A673 (cell line): ENCODE measurements at regions of chr1 and their contacts with region 1.

Region 1: DNA sequence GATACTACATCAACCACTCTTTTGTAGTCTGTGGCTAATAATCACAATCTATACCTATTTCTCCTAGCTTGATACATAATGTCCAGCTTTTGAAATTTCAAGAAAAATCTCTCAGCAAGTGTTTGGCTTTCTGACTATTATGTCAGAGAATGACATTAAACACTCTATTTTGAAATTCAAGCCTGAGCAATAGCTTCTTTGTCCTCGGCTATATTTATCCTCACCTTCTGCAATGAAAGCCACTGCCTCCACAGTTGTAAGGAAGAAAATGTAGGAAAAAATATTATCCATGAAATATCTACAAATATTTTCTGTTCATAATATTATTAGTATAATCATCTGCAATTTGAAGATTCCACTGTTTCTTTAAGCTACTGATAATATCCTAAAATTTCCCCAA is 22.1 kb downstream of the LRRC7 start:
- DNase-seq: no peak
- H3K4me3 ChIP-seq: no peak overlapping the region
- H3K27ac ChIP-seq: no peak overlapping the region
- H3K4me1 ChIP-seq: no peaks in the 10 kb centered on the region
- H3K27me3 ChIP-seq: no peaks in the 10 kb centered on the region
- CTCF ChIP-seq: no peak

Region 2: GRCh38 chr1:68506386-68506785 is 1083.4 kb before region 1 on chr1:
- CTCF ChIA-PET with region 1: no interaction called
- POLR2A ChIA-PET with region 1: no interaction called
- intact Hi-C with region 1: no loop called
- DNase-seq: no peak
- H3K4me3 ChIP-seq: no peak overlapping the region
- H3K27ac ChIP-seq: no peak overlapping the region
- H3K4me1 ChIP-seq: no peaks in the 10 kb centered on the region
- H3K27me3 ChIP-seq: no peaks in the 10 kb centered on the region
- CTCF ChIP-seq: no peak

Region 3: DNA sequence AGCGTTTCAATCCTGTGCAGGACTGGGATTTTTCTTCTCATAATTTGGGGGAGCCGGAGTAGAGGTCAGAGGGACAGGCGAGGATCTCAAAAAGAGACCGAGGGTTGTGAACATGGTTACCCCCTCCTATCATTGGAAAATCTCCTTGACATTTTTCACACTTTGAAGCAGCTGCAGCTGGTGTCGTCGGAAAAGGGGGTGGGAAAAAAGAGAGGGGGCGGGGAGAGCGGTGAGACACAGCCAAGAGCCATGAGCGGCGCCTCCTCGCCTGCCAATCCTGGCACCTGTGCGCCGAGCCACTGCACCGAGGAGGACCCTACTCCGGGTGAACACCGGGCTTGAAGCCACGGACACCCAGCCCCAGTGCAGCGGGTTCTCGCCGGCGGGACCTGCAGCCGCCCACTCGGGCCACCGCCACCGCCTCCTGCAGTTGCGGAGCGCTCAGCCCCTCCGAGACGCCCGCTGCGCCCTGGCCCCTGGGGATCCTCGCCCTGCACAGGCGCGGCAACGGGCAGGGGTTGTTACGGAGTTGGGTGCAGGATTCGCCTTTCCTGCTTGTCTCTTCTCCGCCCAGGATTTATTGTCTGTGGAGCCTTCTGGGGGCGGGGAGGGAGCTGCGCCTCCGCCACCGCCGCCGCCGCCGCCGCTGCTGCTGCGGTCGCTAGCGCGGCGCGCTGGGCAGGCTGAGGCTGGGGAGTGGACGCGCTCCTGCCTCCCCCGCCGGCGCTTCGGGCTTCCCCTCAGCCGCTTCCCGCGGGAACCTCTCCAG is 22.0 kb before region 1 on chr1 and contains the start of gene LRRC7:
- CTCF ChIA-PET with region 1: no interaction called
- POLR2A ChIA-PET with region 1: no interaction called
- intact Hi-C with region 1: no loop called
- DNase-seq: peak; percentile 38
- H3K4me3 ChIP-seq: peak within 1 kb of the TSS; percentile 43
- H3K27ac ChIP-seq: no peak within 1 kb of the TSS
- H3K4me1 ChIP-seq: peaks cover 18% of the 10 kb centered on the region
- H3K27me3 ChIP-seq: peaks cover 75% of the 10 kb centered on the region
- CTCF ChIP-seq: no peak
- total RNA-seq, gene LRRC7: 0.07 TPM in 1 of 2 replicates, not detected in the other

Region 4: DNA sequence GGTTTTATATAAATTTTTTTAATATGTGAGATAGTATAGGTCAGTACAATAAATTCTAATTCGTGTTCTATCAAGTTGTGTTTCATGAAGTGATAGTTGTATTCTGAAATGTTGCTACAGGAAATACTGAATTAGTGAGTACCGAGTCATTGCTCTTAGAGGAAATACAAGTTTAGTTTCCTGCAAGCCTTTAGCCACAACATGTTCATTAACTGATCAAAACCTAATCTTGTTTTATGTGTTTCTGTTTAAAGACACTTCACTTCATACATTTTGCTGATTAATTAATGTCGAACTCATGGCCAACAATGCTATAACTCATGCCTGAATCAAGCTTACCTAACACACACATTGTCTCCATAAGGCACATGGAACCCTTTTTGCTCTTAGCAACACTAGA is 21.5 kb after region 1 on chr1:
- CTCF ChIA-PET with region 1: no interaction called
- POLR2A ChIA-PET with region 1: no interaction called
- intact Hi-C with region 1: loop called (anchors 2 kb)
- DNase-seq: peak; percentile 3
- H3K4me3 ChIP-seq: no peak overlapping the region
- H3K27ac ChIP-seq: no peak overlapping the region
- H3K4me1 ChIP-seq: no peaks in the 10 kb centered on the region
- H3K27me3 ChIP-seq: no peaks in the 10 kb centered on the region
- CTCF ChIP-seq: no peak